Activated CD4-positive, alpha-beta memory T cell treated with anti-CD3 and anti-CD28 coated beads for 36 hours (primary cell): ENCODE measurements at regions of chr11 and their contacts with region 1.

Region 1: GRCh38 chr11:59865031-59865430 is 1.3 kb downstream of the TCN1 start:
- DNase-seq: peak; percentile 15
- H3K4me3 Mint-ChIP-seq: no peak overlapping the region
- H3K27ac Mint-ChIP-seq: no peak overlapping the region
- H3K4me1 Mint-ChIP-seq: no peaks in the 10 kb centered on the region
- H3K27me3 Mint-ChIP-seq: peaks cover 4% of the 10 kb centered on the region

Region 2: GRCh38 chr11:59810189-59810910 is 54.7 kb before region 1 on chr11 and contains the start of gene MRPL16:
- CTCF ChIA-PET with region 1: no interaction called
- POLR2A ChIA-PET with region 1: no interaction called
- intact Hi-C with region 1: loop called (anchors 2 kb)
- DNase-seq: peak; percentile 95
- H3K4me3 Mint-ChIP-seq: peak within 1 kb of the TSS; percentile 90
- H3K27ac Mint-ChIP-seq: peak within 1 kb of the TSS; percentile 86
- H3K4me1 Mint-ChIP-seq: peaks cover 20% of the 10 kb centered on the region
- H3K27me3 Mint-ChIP-seq: no peaks in the 10 kb centered on the region
- total RNA-seq, gene MRPL16: 80.2 to 80.5 TPM

Region 3: GRCh38 chr11:59901306-59901705 is 36.3 kb after region 1 on chr11:
- CTCF ChIA-PET with region 1: no interaction called
- POLR2A ChIA-PET with region 1: no interaction called
- intact Hi-C with region 1: no loop called
- DNase-seq: no peak
- H3K4me3 Mint-ChIP-seq: no peak overlapping the region
- H3K27ac Mint-ChIP-seq: no peak overlapping the region
- H3K4me1 Mint-ChIP-seq: no peaks in the 10 kb centered on the region
- H3K27me3 Mint-ChIP-seq: no peaks in the 10 kb centered on the region